RWPE1 (cell line): ENCODE measurements at regions of chr7 and their contacts with region 1.

Region 1: GRCh38 chr7:55255496-55256435 is 109.4 kb upstream of the LANCL2 start:
- DNase-seq: peak; percentile 74
- H3K27ac ChIP-seq: peak overlapping the region; percentile 74
- CTCF ChIP-seq: peak; percentile 99

Region 2: GRCh38 chr7:54773472-54774399 is 482.0 kb before region 1 on chr7:
- CTCF ChIA-PET with region 1: interaction called, 36 read pairs
- POLR2A ChIA-PET with region 1: no interaction called
- DNase-seq: peak; percentile 77
- H3K27ac ChIP-seq: peak overlapping the region; percentile 55
- CTCF ChIP-seq: peak; percentile 93

Region 3: GRCh38 chr7:54778696-54779540 is 476.8 kb before region 1 on chr7:
- CTCF ChIA-PET with region 1: interaction called, 36 read pairs
- POLR2A ChIA-PET with region 1: no interaction called
- DNase-seq: no peak
- H3K27ac ChIP-seq: no peak overlapping the region
- CTCF ChIP-seq: no peak

Region 4: DNA sequence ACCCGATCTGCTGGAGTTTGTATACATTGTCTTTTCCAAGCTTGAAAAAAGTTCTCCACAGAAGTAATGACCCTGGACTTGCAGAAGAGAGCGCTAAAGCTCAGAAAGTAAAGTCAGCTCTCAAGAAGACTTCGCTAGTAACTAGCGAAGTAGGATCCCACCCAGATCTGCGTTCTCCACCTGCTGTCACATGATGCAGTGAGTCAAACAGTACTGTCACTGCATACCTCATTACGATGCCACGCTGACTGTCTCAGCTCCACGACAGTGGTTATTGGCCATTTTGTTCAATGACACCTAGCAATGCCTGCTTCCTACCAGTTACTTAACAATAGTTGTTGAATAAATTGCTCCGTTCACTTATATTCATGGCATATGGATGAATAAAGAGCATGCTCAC is 467.1 kb before region 1 on chr7:
- CTCF ChIA-PET with region 1: interaction called, 14 read pairs
- POLR2A ChIA-PET with region 1: no interaction called
- DNase-seq: peak; percentile 92
- H3K27ac ChIP-seq: no peak overlapping the region
- CTCF ChIP-seq: peak; percentile 83

Region 5: DNA sequence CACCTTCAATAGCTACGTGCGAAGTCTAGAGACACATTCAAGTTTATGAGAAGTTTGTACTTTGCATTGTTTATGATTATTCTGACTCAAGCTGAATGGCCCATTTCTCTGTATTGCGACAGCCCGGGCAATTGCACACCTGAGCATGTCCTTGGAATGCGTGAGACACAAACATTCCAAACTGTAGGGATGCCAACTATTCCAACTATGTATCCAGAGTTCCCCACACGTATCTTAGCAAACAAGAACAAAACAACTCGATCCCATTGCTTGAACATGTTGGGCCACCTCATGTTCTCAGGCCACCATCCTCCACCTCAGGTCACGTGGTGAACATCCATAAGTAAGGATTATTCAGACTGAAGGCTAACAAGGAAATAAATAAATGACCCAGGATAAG is 288.4 kb before region 1 on chr7:
- CTCF ChIA-PET with region 1: no interaction called
- POLR2A ChIA-PET with region 1: no interaction called
- DNase-seq: peak; percentile 94
- H3K27ac ChIP-seq: peak overlapping the region; percentile 94
- CTCF ChIP-seq: no peak

Region 6: GRCh38 chr7:55022002-55022958 is 233.5 kb before region 1 on chr7:
- CTCF ChIA-PET with region 1: interaction called, 12 read pairs
- POLR2A ChIA-PET with region 1: no interaction called
- DNase-seq: peak; percentile 52
- H3K27ac ChIP-seq: peak overlapping the region; percentile 99
- CTCF ChIP-seq: no peak

Region 7: GRCh38 chr7:55086413-55087201 is 169.2 kb before region 1 on chr7:
- CTCF ChIA-PET with region 1: interaction called, 12 read pairs
- POLR2A ChIA-PET with region 1: no interaction called
- DNase-seq: no peak
- H3K27ac ChIP-seq: peak overlapping the region; percentile 85
- CTCF ChIP-seq: no peak

Region 8: GRCh38 chr7:55171155-55171554 is 84.6 kb before region 1 on chr7:
- CTCF ChIA-PET with region 1: no interaction called
- POLR2A ChIA-PET with region 1: no interaction called
- DNase-seq: no peak
- H3K27ac ChIP-seq: peak overlapping the region; percentile 28
- CTCF ChIP-seq: no peak